ENCODE measurements at regions of chr21 and their contacts with region 1.

Region 1: GRCh38 chr21:34967509-34968289 is 81.4 kb downstream of the RUNX1 start:
- DNase-seq: peak in 3 of 14 experiments; percentile 25 to 60 (median 50)
- ATAC-seq: peak; percentile 43
- H3K4me3 ChIP-seq: no peak overlapping the region
- H3K4me3 Mint-ChIP-seq: peak overlapping the region; percentile 64
- H3K27ac ChIP-seq: peak overlapping the region in 1 of 2 donors; percentile 7
- H3K27ac Mint-ChIP-seq: peak overlapping the region; percentile 86
- H3K4me1 ChIP-seq: peaks cover 82% of the 10 kb centered on the region
- H3K4me1 Mint-ChIP-seq: peaks cover 95% of the 10 kb centered on the region
- H3K27me3 ChIP-seq: no peaks in the 10 kb centered on the region
- H3K27me3 Mint-ChIP-seq: no peaks in the 10 kb centered on the region
- CTCF ChIP-seq: no peak

Region 2: DNA sequence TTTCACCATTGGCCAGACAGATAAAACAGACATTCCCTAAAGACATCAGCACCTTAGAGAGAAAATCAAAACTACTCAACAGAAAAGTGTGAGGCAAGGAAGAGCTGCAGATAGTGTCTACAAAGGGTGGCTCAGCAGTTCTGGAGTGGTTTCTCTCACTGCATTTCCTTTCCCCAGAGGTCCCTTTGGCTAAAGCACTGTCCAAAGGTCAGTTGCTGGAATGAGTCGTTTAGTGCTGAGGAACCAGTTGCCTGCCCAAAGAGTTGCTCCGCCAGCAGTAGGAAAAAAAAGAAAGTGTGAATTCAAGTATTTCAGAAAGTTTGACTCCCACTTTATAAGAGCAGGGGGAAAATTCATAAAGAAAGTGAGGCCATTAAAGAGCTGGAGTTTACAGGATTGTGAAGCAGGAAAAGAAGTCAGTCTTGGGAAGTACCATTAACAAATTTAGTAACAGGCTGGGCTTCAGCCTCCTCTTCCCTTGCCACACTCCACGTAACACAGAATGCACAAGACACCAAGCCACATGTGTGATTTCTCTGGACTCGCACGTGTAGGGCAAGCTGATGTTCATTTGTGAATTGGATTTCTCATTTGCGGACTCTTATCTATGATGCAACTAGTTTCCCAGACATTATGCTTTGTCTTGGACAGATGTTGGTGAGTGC is 40.8 kb before region 1 on chr21:
- CTCF ChIA-PET with region 1: no interaction called
- POLR2A ChIA-PET with region 1: no interaction called
- intact Hi-C with region 1: loop called in 1 of 2 experiments (anchors 5 kb)
- DNase-seq: no peak
- ATAC-seq: no peak
- H3K4me3 ChIP-seq: no peak overlapping the region
- H3K4me3 Mint-ChIP-seq: no peak overlapping the region
- H3K27ac ChIP-seq: no peak overlapping the region
- H3K27ac Mint-ChIP-seq: peak overlapping the region; percentile 34
- H3K4me1 ChIP-seq: peaks cover 21% of the 10 kb centered on the region
- H3K4me1 Mint-ChIP-seq: peaks cover 84% of the 10 kb centered on the region
- H3K27me3 ChIP-seq: no peaks in the 10 kb centered on the region
- H3K27me3 Mint-ChIP-seq: no peaks in the 10 kb centered on the region
- CTCF ChIP-seq: no peak

Region 3: DNA sequence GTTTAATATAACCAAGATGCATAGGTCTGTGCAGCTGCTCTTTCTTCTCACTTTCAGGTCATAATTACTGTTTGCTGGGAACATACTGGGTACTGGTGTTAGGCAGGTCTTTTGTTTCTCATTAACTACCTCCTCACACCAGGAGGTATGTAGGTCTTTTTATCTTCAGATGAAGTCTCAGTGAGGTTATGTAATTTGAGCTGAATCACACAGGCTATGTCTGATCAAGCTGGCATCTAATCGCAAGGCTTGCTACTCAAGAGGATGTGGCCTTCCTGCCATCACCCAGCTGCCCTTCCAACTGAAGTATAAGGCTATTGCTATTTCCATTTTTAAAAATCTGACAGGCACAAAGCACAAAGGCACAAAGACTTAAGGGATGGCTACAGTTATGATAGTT is 15.0 kb before region 1 on chr21:
- CTCF ChIA-PET with region 1: interaction called, 4 read pairs
- POLR2A ChIA-PET with region 1: interaction called, 11 read pairs
- intact Hi-C with region 1: loop called in 1 of 2 experiments (anchors 2 kb)
- DNase-seq: peak in 1 of 14 experiments; percentile 32
- ATAC-seq: peak; percentile 44
- H3K4me3 ChIP-seq: no peak overlapping the region
- H3K4me3 Mint-ChIP-seq: peak overlapping the region; percentile 55
- H3K27ac ChIP-seq: no peak overlapping the region
- H3K27ac Mint-ChIP-seq: peak overlapping the region; percentile 80
- H3K4me1 ChIP-seq: peaks cover 51% of the 10 kb centered on the region
- H3K4me1 Mint-ChIP-seq: peaks cover 78% of the 10 kb centered on the region
- H3K27me3 ChIP-seq: no peaks in the 10 kb centered on the region
- H3K27me3 Mint-ChIP-seq: no peaks in the 10 kb centered on the region
- CTCF ChIP-seq: no peak

Region 4: GRCh38 chr21:35204850-35205541 is 237.3 kb after region 1 on chr21:
- CTCF ChIA-PET with region 1: no interaction called
- POLR2A ChIA-PET with region 1: no interaction called
- intact Hi-C with region 1: no loop called
- DNase-seq: peak in 4 of 14 experiments; percentile 14 to 33 (median 22)
- ATAC-seq: no peak
- H3K4me3 ChIP-seq: peak overlapping the region; percentile 48
- H3K4me3 Mint-ChIP-seq: peak overlapping the region; percentile 84
- H3K27ac ChIP-seq: no peak overlapping the region
- H3K27ac Mint-ChIP-seq: no peak overlapping the region
- H3K4me1 ChIP-seq: peaks cover 16% of the 10 kb centered on the region
- H3K4me1 Mint-ChIP-seq: peaks cover 19% of the 10 kb centered on the region
- H3K27me3 ChIP-seq: peaks cover 0 to 3% of the 10 kb centered on the region in 2 experiments
- H3K27me3 Mint-ChIP-seq: no peaks in the 10 kb centered on the region
- CTCF ChIP-seq: no peak

Region 5: DNA sequence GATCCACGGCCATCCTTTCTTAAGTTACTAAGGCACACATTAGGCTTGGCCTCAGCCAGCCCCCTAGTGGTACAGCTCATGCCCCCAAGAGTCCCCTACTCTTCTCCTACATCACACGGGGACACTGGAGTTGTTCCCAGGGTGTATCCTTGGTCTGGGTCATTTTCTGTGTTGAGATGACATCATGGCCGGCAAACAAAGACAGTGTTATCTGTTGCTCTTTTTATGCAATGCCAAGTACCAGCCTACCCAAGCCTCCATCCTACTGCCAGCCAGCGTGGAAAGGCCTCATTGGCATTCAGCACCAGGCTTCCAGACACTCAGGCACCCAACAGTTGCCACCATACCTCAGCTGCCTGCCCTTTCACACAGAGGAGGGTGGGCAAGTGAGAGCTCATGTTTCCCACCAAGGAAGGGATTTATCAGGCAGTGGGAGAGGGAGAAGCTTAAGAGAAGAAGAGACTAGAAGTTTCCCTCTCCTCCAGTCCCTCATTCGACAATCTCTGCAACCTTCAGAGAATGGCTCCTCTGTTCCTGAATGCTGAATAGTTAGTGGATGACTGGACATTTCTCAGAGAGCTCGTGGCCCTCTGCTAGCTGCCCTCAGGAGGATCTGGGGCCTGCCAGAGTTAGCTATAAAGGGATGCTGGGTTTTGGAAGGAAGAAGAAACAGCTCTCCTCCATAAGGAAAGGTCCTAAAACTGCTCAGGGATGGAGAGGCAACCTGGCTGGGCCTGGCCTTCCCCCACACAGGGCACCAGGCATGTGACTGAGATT is 1119.9 kb after region 1 on chr21:
- CTCF ChIA-PET with region 1: no interaction called
- POLR2A ChIA-PET with region 1: no interaction called
- intact Hi-C with region 1: no loop called
- DNase-seq: no peak
- ATAC-seq: no peak
- H3K4me3 ChIP-seq: no peak overlapping the region
- H3K4me3 Mint-ChIP-seq: no peak overlapping the region
- H3K27ac ChIP-seq: no peak overlapping the region
- H3K27ac Mint-ChIP-seq: no peak overlapping the region
- H3K4me1 ChIP-seq: no peaks in the 10 kb centered on the region
- H3K4me1 Mint-ChIP-seq: peaks cover 10% of the 10 kb centered on the region
- H3K27me3 ChIP-seq: peaks cover 0 to under 1% of the 10 kb centered on the region in 2 experiments
- H3K27me3 Mint-ChIP-seq: no peaks in the 10 kb centered on the region
- CTCF ChIP-seq: no peak